Activated naive CD4-positive, alpha-beta T cell treated with anti-CD3 and anti-CD28 coated beads, Interleukin-2, amount 10 ng/mL, durations not matched to agents 7 days and 5 days (primary cell): ENCODE measurements at regions of chr15 and their contacts with region 1.

Region 1: DNA sequence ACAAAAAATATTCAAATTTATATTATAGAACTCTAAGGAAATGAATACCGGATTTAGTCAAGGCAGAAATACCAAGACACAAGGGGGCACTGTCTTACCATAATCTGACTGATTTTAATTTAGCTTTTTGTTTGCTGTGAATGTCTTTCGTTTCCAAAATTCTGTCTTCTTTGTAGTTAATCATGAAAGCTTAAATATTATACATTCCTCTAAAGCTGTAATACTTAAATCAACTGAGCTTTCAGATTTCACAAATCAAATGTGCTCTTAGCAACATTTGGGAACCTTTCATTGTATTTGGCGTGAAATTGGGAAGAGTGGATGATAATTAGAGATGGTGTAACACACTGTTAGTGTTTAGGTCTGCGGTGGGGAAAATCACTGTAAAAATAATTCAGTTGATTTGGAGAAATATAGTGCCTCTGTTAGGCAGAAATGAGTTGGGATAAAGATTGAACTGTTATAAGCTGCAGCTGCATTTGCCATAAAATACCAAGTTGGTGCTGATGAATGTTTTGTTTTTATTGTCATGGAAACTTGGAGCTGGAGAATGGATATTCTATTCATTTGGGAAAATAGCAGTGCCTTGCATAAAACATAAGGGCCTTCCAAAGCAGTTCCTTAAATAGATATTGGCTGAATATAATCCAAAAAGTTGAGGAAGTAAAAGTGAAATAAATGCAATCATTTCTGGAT is 228.2 kb downstream of the TCF12 start:
- DNase-seq: no peak
- H3K4me3 Mint-ChIP-seq: no peak overlapping the region
- H3K27ac Mint-ChIP-seq: no peak overlapping the region
- H3K4me1 Mint-ChIP-seq: peaks cover 3% of the 10 kb centered on the region
- H3K27me3 Mint-ChIP-seq: no peaks in the 10 kb centered on the region

Region 2: GRCh38 chr15:57045741-57046382 is 100.8 kb before region 1 on chr15:
- CTCF ChIA-PET with region 1: no interaction called
- DNase-seq: no peak
- H3K4me3 Mint-ChIP-seq: no peak overlapping the region
- H3K27ac Mint-ChIP-seq: no peak overlapping the region
- H3K4me1 Mint-ChIP-seq: no peaks in the 10 kb centered on the region
- H3K27me3 Mint-ChIP-seq: no peaks in the 10 kb centered on the region

Region 3: DNA sequence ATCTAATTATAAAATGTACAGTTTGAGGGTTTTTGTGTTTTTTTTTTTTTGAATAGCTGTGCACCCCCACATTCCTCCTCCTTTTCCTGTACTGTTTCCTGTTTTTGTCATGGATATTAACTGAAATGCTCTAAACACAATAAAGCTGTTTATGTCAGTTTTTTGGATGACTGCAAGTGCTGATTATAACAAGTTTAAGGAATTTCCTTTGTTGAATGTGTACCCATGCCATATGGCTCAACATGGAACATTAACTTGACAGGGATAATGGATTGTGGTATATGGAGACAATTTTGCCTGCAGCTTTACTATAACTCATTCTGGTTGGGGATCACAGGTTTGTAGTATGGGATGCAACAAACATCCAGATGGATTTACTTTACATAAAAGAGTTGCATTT is 11.8 kb before region 1 on chr15:
- CTCF ChIA-PET with region 1: interaction called, 22 read pairs
- DNase-seq: no peak
- H3K4me3 Mint-ChIP-seq: no peak overlapping the region
- H3K27ac Mint-ChIP-seq: no peak overlapping the region
- H3K4me1 Mint-ChIP-seq: peaks cover 44% of the 10 kb centered on the region
- H3K27me3 Mint-ChIP-seq: no peaks in the 10 kb centered on the region

Region 4: GRCh38 chr15:57213862-57214261 is 67.2 kb after region 1 on chr15:
- CTCF ChIA-PET with region 1: interaction called, 17 read pairs
- DNase-seq: no peak
- H3K4me3 Mint-ChIP-seq: no peak overlapping the region
- H3K27ac Mint-ChIP-seq: no peak overlapping the region
- H3K4me1 Mint-ChIP-seq: peaks cover 5% of the 10 kb centered on the region
- H3K27me3 Mint-ChIP-seq: no peaks in the 10 kb centered on the region

Region 5: GRCh38 chr15:57251941-57252340 is 105.3 kb after region 1 on chr15:
- CTCF ChIA-PET with region 1: no interaction called
- DNase-seq: no peak
- H3K4me3 Mint-ChIP-seq: no peak overlapping the region
- H3K27ac Mint-ChIP-seq: no peak overlapping the region
- H3K4me1 Mint-ChIP-seq: no peaks in the 10 kb centered on the region
- H3K27me3 Mint-ChIP-seq: no peaks in the 10 kb centered on the region

Region 6: DNA sequence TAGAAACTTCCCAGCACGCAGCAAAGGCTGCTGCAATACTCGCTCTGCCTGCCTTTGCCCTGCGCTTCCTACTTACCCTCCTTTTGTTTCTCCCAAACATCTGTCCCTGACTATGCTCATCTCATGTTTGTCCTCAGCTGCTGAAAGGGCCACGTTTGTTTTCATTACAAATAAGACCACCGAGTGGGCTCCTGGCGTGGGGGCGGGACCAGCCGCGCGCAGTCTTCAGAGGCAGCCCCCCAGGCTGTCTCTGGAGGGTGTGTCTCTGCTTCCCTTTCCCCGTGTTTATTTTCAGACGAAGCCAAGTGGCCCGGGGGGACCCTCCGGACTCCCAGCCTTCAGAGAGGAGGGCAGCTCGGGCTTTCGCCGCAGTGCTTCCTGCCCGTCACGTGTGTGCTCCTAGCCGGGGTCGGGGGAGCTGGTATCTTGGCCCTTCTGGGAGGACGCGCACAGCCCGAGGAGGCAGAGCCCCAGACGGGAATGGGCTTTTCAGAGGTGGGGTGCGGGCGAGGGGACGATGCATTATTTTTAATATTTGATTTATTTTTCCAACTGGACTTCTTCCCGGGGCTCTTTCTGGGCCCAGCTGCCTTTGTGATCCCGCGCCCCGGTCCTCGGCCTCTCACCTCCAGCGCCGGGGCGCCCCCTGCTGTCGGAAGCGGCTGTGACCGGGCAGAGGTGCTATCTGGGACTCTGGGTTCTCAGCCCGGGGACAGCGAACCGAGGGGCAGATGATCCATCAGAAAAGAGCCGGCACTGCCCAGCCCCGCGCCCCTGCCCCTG is 159.7 kb after region 1 on chr15:
- CTCF ChIA-PET with region 1: interaction called, 80 read pairs
- DNase-seq: peak; percentile 87
- H3K4me3 Mint-ChIP-seq: peak overlapping the region; percentile 53
- H3K27ac Mint-ChIP-seq: peak overlapping the region; percentile 64
- H3K4me1 Mint-ChIP-seq: peaks cover 5% of the 10 kb centered on the region
- H3K27me3 Mint-ChIP-seq: peaks cover 43% of the 10 kb centered on the region

Region 7: GRCh38 chr15:57527382-57528091 is 380.9 kb after region 1 on chr15:
- CTCF ChIA-PET with region 1: interaction called, 11 read pairs
- DNase-seq: peak; percentile 24
- H3K4me3 Mint-ChIP-seq: no peak overlapping the region
- H3K27ac Mint-ChIP-seq: no peak overlapping the region
- H3K4me1 Mint-ChIP-seq: no peaks in the 10 kb centered on the region
- H3K27me3 Mint-ChIP-seq: peaks cover 35% of the 10 kb centered on the region